ENCODE measurements at regions of chr20 and their contacts with region 1.

Region 1: GRCh38 chr20:25418776-25419175 is 11.3 kb downstream of the GINS1 start:
- DNase-seq: peak; percentile 62
- H3K4me3 ChIP-seq: no peak overlapping the region
- H3K27ac ChIP-seq: no peak overlapping the region
- H3K4me1 ChIP-seq: peaks cover 3% of the 10 kb centered on the region
- H3K27me3 ChIP-seq: no peaks in the 10 kb centered on the region
- CTCF ChIP-seq: no peak

Region 2: DNA sequence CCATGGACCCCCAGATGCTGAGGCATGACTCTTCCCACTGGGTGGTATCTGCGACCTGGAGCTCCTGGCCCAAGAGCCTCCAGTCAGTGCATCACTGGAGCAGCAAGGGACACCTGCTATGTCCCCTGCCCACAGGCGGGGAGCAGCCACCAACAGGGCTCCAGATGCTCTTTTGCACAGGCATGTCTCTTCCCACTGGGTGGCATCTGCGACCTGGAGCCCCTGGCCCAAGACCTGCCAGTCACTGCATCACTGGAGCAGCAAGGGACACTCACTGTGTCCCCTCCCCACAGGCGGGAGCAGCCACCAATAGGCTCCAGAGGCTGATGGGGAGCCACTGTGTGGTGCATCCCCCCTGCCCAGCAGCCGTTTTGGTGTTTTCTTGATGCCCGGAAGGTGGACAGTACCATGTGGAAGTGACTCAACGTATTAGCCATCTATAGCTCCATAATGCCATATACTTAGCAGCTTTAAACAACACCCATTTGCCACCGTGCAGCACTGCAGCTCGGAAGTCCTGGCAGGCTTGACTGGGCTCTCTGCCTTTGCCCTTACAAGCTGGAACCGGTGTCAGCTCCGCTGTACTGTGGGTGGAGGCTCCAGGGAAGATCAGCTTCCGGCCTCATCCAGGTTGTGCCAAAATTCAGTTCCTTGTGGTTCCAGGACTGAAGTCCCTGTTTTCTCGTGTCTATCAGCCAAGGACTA is 594.6 kb before region 1 on chr20:
- CTCF ChIA-PET with region 1: no interaction called
- dilution Hi-C with region 1: no loop called
- in situ Hi-C with region 1: no loop called
- intact Hi-C with region 1: no loop called
- DNase-seq: no peak
- H3K4me3 ChIP-seq: no peak overlapping the region
- H3K27ac ChIP-seq: no peak overlapping the region
- H3K4me1 ChIP-seq: no peaks in the 10 kb centered on the region
- H3K27me3 ChIP-seq: no peaks in the 10 kb centered on the region
- CTCF ChIP-seq: no peak

Region 3: DNA sequence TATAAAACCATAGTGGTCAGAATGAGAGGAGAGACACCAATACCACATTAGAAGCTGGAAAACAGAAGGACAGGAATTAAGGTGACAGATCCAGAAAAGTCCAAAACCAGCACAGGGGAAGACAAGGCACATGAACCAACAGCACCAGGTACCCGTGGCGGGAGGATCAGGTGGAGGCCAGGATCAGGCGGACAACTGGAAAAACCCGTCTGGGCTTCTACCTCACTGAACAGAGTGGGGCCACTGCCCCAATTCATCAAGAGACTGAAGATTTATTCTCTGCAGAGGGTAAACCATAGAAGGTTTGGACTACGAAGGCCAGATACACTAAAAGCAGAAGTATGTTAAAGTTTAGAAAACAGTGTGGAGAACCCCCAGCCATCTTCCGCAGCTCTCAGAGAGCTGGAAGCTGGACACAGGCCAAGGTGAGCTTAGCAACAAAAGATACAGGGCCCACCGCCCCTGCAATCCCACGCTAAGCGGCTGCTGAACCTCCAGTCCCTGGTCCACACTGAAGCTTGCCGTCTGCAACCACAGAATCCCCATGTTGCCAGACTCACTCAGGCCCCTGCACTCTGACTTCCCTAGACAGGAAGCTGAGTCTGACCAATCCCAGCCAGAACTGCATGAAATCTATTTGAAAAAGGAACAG is 58.0 kb before region 1 on chr20:
- CTCF ChIA-PET with region 1: no interaction called
- dilution Hi-C with region 1: no loop called
- in situ Hi-C with region 1: loop called in 1 of 2 experiments (anchors 10 kb)
- intact Hi-C with region 1: no loop called
- DNase-seq: no peak
- H3K4me3 ChIP-seq: no peak overlapping the region
- H3K27ac ChIP-seq: no peak overlapping the region
- H3K4me1 ChIP-seq: no peaks in the 10 kb centered on the region
- H3K27me3 ChIP-seq: no peaks in the 10 kb centered on the region
- CTCF ChIP-seq: no peak

Region 4: GRCh38 chr20:25461771-25462545 is 43.2 kb after region 1 on chr20:
- CTCF ChIA-PET with region 1: no interaction called
- dilution Hi-C with region 1: loop called (anchors 5 kb)
- in situ Hi-C with region 1: no loop called
- intact Hi-C with region 1: no loop called
- DNase-seq: no peak
- H3K4me3 ChIP-seq: no peak overlapping the region
- H3K27ac ChIP-seq: no peak overlapping the region
- H3K4me1 ChIP-seq: no peaks in the 10 kb centered on the region
- H3K27me3 ChIP-seq: no peaks in the 10 kb centered on the region
- CTCF ChIP-seq: no peak

Region 5: DNA sequence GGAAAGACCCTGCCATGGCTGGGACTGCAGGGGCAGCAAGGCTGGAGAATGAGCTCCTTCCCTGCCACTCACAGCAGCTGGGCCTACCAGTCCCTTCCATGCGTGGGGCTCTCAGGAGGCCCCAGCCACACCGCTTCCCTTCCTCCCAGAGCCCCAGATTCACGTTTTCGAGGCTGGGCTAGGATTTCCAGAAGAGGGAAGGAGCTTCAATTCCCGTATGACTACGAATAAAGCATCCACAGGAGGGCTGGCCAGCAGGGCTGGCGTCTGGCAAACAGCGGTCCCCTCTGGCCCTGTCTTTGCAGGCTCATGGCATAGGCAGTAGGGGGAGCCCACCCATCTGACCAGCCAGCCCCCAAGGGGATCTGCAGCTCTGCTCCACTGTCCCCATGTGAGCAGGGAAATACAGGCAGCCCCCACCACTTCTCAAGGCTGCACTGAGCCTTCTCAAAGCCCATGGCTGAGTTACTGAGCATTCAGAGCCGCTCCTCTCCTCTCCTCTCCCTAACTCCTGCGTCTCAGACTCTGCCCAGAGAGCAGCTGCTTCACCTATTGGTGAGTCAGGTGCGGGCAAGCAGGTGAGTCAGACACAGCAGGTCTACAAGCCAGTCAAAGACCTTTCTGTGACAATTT is 113.5 kb after region 1 on chr20:
- CTCF ChIA-PET with region 1: no interaction called
- dilution Hi-C with region 1: no loop called
- in situ Hi-C with region 1: no loop called
- intact Hi-C with region 1: no loop called
- DNase-seq: peak; percentile 66
- H3K4me3 ChIP-seq: no peak overlapping the region
- H3K27ac ChIP-seq: no peak overlapping the region
- H3K4me1 ChIP-seq: peaks cover 5% of the 10 kb centered on the region
- H3K27me3 ChIP-seq: no peaks in the 10 kb centered on the region
- CTCF ChIP-seq: peak in 1 of 2 donors; percentile 24